ENCODE measurements at regions of chr3 and their contacts with region 1.

Region 1: GRCh38 chr3:16516695-16517481 is 3.4 kb upstream of the RFTN1 start:
- DNase-seq: no peak
- H3K4me3 ChIP-seq: no peak overlapping the region
- H3K27ac ChIP-seq: peak overlapping the region; percentile 33 to 61 (median 51)
- H3K4me1 ChIP-seq: peaks cover 22 to 46% (median 43%) of the 10 kb centered on the region in 4 donors
- H3K27me3 ChIP-seq: no peaks in the 10 kb centered on the region
- CTCF ChIP-seq: peak; percentile 50 to 64 (median 62)
- EP300 ChIP-seq: no peak
- POLR2A ChIP-seq: no peak

Region 2: GRCh38 chr3:16290007-16290826 is 226.7 kb before region 1 on chr3:
- intact Hi-C with region 1: loop called (anchors 2 kb)
- DNase-seq: no peak
- H3K4me3 ChIP-seq: peak overlapping the region in 1 of 4 donors; percentile 9
- H3K27ac ChIP-seq: peak overlapping the region; percentile 8 to 56 (median 29)
- H3K4me1 ChIP-seq: peaks cover 25 to 55% (median 44%) of the 10 kb centered on the region in 4 donors
- H3K27me3 ChIP-seq: no peaks in the 10 kb centered on the region
- CTCF ChIP-seq: peak; percentile 81 to 88 (median 84)
- EP300 ChIP-seq: no peak
- POLR2A ChIP-seq: no peak

Region 3: DNA sequence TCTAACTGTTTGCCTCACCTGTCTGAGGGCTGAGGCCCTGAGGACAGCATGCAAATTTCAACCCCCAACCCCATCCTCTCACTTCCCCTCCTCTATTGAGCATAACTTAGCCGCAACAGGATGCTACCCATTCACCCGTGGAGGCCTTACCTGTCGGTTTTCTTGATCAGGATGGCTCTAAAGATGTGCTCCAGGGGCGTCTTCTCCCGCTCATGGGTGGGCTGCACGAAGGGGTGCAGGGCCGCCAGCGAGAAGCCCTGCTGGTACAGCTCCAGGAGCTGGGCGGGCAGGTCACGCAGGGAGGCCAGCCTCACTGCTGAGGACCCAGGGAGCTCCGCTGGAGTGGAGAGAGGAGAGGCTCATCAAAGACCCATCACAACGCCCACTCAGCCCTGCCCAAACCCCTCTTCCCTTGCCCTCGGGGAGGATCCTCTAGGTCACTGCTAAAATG is 83.2 kb before region 1 on chr3:
- intact Hi-C with region 1: no loop called
- DNase-seq: no peak
- H3K4me3 ChIP-seq: no peak overlapping the region
- H3K27ac ChIP-seq: peak overlapping the region in 1 of 4 donors; percentile 8
- H3K4me1 ChIP-seq: peaks cover 9 to 34% (median 27%) of the 10 kb centered on the region in 4 donors
- H3K27me3 ChIP-seq: no peaks in the 10 kb centered on the region
- CTCF ChIP-seq: no peak
- EP300 ChIP-seq: no peak
- POLR2A ChIP-seq: no peak

Region 4: DNA sequence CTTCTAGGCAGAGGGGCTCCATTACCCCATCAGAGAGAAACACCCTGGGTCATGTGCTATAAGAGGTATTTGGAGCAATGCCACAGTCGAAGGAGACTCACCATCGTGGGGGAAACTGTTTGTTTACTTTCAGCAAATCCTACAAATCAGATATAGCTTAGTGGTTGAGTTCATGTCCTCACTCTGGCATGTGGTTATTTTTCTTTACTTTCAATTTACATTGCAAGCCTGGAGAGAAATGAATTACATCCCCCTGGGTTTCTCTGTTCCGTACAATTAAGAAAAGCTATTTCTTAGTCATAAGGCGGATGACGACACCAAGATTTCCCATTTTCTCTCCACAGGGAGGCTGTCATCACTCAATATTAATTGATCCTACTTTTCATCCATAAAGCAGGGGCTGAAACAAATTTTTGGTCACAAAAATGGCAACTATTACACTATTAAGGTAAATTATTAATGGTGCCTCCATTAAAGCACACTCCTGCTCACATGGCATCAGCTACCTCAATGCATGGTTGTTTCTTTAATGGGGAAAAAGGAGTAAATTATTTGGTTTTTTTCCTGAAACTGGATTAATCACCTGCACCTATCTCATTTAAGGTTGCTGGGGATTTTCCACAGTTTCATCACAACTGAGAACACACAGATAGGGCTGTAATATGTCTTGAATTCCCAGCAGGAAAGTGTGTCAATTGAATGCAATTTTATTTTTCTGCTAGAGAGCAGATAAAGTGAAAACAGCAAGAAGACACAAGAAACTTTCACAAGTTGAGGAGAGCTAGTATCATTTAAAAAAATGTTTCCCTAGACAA is 40.0 kb before region 1 on chr3:
- intact Hi-C with region 1: no loop called
- DNase-seq: no peak
- H3K4me3 ChIP-seq: no peak overlapping the region
- H3K27ac ChIP-seq: peak overlapping the region in 2 of 4 donors; percentile 40 to 51
- H3K4me1 ChIP-seq: peaks cover 21 to 94% (median 72%) of the 10 kb centered on the region in 4 donors
- H3K27me3 ChIP-seq: no peaks in the 10 kb centered on the region
- CTCF ChIP-seq: no peak
- EP300 ChIP-seq: no peak
- POLR2A ChIP-seq: no peak

Measured in esophagus muscularis mucosa (tissue), 4 donors.